AG04450 (cell line): ENCODE measurements at regions of chr2 and their contacts with region 1.

Region 1: DNA sequence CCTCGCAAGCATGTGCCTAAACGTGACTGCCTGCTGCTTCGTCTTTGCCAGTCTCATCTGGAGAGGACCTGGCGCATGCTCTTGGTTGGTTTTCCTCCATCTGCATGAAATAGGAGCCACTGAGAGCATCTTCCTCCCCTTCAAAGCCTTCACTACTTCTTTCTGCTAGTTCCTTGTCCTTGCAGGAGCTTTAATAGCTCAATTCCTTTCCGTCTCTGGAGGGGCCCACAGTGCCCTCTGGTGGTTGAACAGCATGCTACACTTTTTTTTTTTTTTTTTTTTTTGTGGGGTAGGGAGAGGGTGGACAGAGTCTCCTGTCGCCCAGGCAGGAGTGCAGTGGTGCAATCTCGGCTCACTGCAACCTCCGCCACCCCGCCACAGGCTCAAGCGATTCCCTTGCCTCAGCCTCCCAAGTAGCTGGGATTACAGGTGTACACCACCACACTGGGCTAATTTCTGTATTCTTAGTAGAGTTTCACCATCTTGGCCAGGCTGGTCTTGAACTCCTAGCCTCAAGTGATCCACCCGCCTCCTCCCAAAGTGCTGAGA is 59.6 kb downstream of the SP110 start:
- DNase-seq: peak; percentile 7
- H3K4me3 ChIP-seq: no peak overlapping the region
- H3K27ac ChIP-seq: no peak overlapping the region
- H3K27me3 ChIP-seq: no peaks in the 10 kb centered on the region
- CTCF ChIP-seq: peak; percentile 80

Region 2: DNA sequence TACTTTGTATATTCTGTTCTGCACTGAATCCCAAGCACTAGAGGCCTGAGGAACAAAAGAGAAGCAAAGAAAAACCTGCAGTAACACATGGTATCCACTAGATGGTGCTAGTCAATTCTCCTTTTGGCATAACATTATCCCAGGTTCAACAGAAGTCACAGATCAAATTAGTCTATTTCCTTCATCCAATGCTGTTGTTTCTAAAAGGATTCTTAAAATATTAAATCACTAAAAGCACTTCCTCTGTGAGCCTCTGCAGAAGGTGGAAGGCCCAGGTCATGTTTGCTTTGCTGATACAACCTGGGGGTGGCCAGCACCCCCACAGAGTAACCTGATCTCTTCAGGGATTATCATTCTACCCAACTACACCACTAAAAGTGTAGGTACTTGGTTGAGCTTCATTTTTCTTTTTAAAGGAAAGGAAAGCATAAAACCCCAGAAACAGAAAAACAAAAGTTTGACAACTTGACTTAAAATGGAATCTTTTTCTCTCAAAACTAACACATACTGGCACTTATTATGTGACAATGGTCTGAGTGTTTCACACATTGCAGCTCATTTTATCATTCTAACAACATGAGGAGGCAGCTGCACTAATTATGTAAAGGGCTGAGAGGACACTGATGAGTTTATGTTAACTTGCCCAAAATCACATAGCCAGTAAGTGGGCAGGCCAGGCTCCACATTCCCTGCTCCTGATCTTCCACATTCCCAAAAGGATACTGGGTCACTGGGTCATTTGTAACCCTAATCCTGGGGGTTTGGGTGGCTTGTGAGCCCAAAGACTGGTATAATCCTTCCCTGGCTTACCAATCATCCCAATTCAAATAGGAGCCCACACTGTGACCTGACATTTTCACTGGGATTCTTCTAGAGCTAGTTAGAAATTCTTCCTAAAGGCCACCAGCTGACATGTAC is 379.1 kb before region 1 on chr2:
- CTCF ChIA-PET with region 1: interaction called, 26 read pairs
- POLR2A ChIA-PET with region 1: no interaction called
- DNase-seq: peak; percentile 21
- H3K4me3 ChIP-seq: no peak overlapping the region
- H3K27ac ChIP-seq: no peak overlapping the region
- H3K27me3 ChIP-seq: no peaks in the 10 kb centered on the region
- CTCF ChIP-seq: peak; percentile 92

Region 3: DNA sequence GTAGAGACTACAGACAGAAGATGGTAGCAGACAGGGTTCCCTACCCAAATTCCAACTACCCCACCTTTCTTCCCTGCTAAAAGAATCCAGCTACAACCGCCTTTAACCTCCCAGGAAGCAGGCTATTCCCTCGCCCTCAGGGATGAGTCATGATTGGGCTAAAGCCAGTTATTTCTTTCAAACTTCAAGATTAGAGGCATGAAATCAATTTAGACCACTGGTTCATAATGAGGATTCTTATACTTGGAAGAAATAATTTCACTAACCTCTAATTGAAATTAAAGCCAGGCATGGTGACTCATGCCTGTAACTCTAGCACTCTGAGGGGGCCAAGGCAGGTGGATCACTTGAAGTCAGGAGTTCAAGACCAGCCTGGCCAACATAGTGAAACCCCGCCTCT is 258.4 kb before region 1 on chr2:
- CTCF ChIA-PET with region 1: no interaction called
- POLR2A ChIA-PET with region 1: no interaction called
- DNase-seq: no peak
- H3K4me3 ChIP-seq: no peak overlapping the region
- H3K27ac ChIP-seq: no peak overlapping the region
- H3K27me3 ChIP-seq: no peaks in the 10 kb centered on the region
- CTCF ChIP-seq: no peak

Region 4: GRCh38 chr2:230007931-230008707 is 152.1 kb before region 1 on chr2:
- CTCF ChIA-PET with region 1: interaction called, 149 read pairs
- POLR2A ChIA-PET with region 1: no interaction called
- DNase-seq: peak; percentile 51
- H3K4me3 ChIP-seq: no peak overlapping the region
- H3K27ac ChIP-seq: no peak overlapping the region
- H3K27me3 ChIP-seq: no peaks in the 10 kb centered on the region
- CTCF ChIP-seq: peak; percentile 87

Region 5: GRCh38 chr2:230053753-230054478 is 106.3 kb before region 1 on chr2:
- CTCF ChIA-PET with region 1: interaction called, 15 read pairs
- POLR2A ChIA-PET with region 1: no interaction called
- DNase-seq: no peak
- H3K4me3 ChIP-seq: no peak overlapping the region
- H3K27ac ChIP-seq: no peak overlapping the region
- H3K27me3 ChIP-seq: no peaks in the 10 kb centered on the region
- CTCF ChIP-seq: no peak

Region 6: DNA sequence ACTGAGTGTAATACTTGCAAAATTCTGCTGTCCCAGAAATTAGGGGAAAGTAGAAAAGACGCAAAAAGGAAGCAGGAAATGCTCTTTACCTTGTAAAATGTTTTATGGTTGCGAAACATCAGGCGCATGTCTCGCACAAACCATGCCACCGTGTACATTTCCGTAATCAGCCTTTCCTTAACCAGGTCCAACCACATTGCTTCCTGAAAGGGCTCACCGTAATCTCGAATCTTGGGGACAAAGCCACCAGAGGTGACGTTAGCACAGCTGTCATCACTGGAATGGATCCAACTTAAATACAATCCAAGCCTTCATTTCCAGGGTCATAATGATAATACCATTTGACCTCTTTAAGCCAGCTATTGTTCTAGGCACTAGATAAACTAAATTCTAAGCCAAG is 10.3 kb after region 1 on chr2:
- CTCF ChIA-PET with region 1: interaction called, 38 read pairs
- POLR2A ChIA-PET with region 1: no interaction called
- DNase-seq: no peak
- H3K4me3 ChIP-seq: no peak overlapping the region
- H3K27ac ChIP-seq: no peak overlapping the region
- H3K27me3 ChIP-seq: no peaks in the 10 kb centered on the region
- CTCF ChIP-seq: no peak

Region 7: DNA sequence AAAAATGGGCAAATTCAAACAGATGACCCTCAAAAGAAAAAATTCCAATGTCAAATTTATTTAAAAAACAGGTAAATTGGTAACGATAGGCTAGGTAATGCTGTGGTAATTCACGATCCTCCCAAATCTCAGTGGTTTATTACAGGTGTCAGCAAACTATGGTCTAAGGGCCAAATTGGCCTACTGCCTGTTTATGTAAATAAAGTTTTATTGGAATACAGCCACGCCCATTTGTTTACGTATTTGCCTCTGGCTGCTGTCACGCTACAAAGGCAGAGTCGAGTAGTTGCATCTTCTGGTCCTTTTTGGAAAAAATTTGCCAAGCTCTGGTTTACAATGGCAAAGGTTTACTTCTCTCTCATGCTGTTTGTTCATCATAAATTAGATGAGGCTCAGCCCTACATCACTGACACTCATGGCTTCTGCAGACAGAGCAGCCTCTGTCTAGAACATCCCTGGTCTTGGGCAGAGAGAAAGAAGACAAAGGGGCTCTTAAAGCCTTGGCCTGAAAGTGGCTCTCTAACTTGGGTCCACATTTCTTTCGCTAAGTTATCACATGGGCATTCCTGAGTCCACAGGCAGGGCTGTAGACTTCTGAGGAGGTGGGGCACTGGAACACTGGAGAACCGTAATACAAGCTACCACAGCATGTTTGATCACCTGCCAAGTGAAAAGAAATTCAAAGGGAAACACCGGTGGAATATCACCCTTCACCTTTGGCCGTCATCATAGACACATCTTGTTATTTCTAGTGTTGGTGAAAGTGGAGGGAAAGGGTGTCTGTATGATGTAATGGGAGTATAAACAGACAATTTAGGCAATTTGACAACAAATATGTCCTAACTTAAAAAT is 24.8 kb after region 1 on chr2:
- CTCF ChIA-PET with region 1: interaction called, 13 read pairs
- POLR2A ChIA-PET with region 1: no interaction called
- DNase-seq: no peak
- H3K4me3 ChIP-seq: no peak overlapping the region
- H3K27ac ChIP-seq: no peak overlapping the region
- H3K27me3 ChIP-seq: no peaks in the 10 kb centered on the region
- CTCF ChIP-seq: no peak